ENCODE measurements at regions of chr19 and their contacts with region 1.

Region 1: DNA sequence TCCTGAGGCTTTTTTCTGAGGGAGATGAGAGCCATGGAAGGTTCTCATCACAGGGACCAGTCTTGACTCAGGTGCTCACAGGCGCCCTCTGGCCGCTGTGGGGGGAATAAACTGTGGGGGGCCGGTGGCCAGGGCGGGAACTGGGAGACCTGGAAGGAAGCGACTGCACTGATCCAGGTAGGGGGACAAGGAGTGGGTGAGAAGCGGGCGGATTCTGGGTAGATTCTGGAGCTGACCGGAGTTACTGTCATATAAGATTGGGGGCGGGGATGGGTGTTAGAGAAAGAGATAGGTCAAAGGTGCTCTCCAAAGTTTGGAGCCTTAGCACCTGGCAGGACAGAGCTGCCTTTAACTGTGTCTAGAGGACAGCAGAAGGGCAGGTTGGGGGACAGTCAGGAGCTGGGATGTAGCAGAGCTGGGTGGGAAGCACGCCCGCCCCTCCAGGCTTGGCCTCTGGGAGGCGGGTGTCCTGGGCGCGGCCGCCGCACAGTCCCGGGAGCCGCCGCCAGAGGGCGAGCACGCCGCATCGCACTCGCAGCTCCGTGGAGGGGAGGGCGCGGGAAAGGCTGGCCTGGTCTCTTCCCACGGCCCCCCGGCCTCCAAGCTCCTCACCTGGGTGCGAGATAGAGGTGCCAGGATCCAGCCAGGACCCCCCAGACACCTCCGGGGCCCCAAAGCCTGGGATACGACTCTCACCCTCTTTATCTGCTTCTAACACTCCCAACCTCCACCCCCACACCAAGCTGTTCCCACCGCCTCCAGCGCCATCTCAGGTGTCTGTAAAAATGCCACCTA is 4.2 kb upstream of the DAND5 start:
- DNase-seq: peak; percentile 68 to 97 (median 78)
- ATAC-seq: peak; percentile 99
- H3K4me3 ChIP-seq: peak overlapping the region; percentile 26 to 42
- H3K27ac ChIP-seq: peak overlapping the region in 1 of 2 donors; percentile 68
- H3K4me1 ChIP-seq: peaks cover 0 to 10% of the 10 kb centered on the region in 2 donors
- H3K27me3 ChIP-seq: no peaks in the 10 kb centered on the region
- CTCF ChIP-seq: peak; percentile 94 to 97

Region 2: DNA sequence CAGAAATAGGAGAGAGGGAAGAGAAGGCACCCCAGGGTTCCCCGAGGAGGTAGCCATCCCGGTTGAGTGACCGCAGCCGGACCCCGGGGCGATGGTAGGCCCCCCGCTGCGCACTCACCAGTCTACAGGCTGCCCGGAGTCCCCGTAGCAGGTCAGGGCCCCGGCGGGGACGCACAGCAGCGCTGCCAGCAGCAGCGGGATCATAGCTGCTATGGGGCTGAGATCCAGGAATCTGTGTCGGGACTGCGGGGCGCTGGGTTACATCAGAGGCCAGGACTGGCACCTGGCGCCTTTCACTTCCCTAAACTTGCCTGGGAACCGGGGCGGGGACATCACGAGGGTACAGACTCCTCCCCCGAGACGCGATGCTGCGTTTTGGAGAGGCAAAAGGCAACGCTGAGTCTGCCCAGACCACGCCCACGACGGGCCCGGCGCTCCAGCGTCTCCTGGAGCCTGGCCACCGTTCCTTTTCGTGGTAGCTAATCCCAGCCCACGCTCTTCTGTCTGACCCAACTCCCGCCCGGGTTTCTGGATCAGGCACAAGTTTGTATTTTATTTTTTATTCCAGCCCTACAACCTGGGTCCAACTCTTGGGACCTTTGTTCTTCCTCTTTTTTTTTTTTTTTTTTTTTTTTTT is 83.9 kb before region 1 on chr19 and contains the start of gene DNASE2:
- intact Hi-C with region 1: loop called in 1 of 2 experiments (anchors 10 kb)
- DNase-seq: peak; percentile 91 to 98 (median 97)
- ATAC-seq: peak; percentile 89
- H3K4me3 ChIP-seq: peak within 1 kb of the TSS; percentile 76 to 91
- H3K27ac ChIP-seq: peak within 1 kb of the TSS; percentile 85 to 90
- H3K4me1 ChIP-seq: peaks cover 0 to 53% of the 10 kb centered on the region in 2 donors
- H3K27me3 ChIP-seq: peaks cover 0 to 24% of the 10 kb centered on the region in 2 donors
- CTCF ChIP-seq: no peak
- polyA plus RNA-seq, gene DNASE2: 18.7 to 22.2 (median 20.6) TPM